ENCODE measurements at regions of chr19 and their contacts with region 1.

Region 1: DNA sequence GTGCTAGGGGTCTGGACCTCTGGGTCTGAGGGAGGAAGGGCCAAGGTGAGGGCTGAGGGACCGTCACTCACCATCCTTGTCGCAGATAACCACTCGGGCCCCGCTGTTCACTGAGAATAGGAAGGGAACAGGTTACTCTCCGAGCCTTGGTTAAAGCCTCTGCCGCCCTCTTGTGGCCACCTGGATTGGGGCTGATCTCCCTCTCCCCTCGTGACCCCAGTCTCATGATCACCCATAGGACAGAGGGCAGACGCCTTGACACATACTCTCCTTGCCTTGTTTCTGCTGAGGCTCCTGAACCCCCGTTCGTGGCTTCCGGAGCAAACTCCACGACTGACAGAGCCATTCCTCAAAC is 580 bp downstream of the HSD17B14 start:
- DNase-seq: peak; percentile 98
- H3K4me3 ChIP-seq: peak overlapping the region; percentile 30 to 51 (median 41)
- H3K27ac ChIP-seq: peak overlapping the region; percentile 71 to 86 (median 82)
- H3K4me1 ChIP-seq: peaks cover 0 to 27% (median 21%) of the 10 kb centered on the region in 4 donors
- H3K27me3 ChIP-seq: no peaks in the 10 kb centered on the region
- CTCF ChIP-seq: peak; percentile 86 to 98 (median 92)
- EP300 ChIP-seq: no peak
- POLR2A ChIP-seq: peak in 1 of 2 donors; percentile 42

Region 2: GRCh38 chr19:48379058-48379457 is 456.7 kb before region 1 on chr19:
- intact Hi-C with region 1: no loop called
- DNase-seq: no peak
- H3K4me3 ChIP-seq: no peak overlapping the region
- H3K27ac ChIP-seq: no peak overlapping the region
- H3K4me1 ChIP-seq: no peaks in the 10 kb centered on the region
- H3K27me3 ChIP-seq: no peaks in the 10 kb centered on the region
- CTCF ChIP-seq: no peak
- EP300 ChIP-seq: no peak
- POLR2A ChIP-seq: no peak

Region 3: DNA sequence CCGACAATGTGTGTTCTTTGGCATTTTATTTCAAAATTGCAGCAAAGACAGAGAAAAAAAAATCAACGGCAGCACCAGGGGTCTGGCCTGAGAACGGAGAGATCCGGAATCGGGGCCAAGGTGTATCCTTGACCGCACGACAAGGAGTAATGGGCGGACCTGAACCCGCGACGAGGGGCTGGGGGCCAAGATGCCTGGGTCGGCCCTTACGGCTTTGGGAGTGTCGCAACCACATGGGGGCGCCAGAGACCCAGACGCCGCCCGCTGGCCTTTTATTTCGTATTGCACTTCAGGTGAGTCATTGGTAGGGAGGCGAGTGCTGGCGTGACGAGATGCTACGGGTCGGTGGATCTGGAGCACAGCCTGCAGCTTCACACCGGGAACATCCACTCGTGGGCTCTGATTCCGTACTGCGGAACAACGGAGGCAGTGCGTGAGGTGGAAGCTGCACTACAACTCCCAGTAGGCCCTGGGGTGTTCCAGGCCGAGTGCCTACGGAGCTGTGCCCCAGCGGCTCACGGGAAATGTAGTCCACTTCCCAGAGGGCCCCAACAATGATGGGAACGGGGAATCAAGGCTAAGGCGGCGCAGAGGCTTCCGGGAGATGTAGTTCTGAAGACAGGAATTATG is 40.5 kb before region 1 on chr19:
- intact Hi-C with region 1: loop called (anchors 1 kb)
- DNase-seq: peak; percentile 97
- H3K4me3 ChIP-seq: peak overlapping the region; percentile 8 to 55 (median 47)
- H3K27ac ChIP-seq: peak overlapping the region; percentile 86 to 90 (median 87)
- H3K4me1 ChIP-seq: peaks cover 0 to 21% (median 20%) of the 10 kb centered on the region in 4 donors
- H3K27me3 ChIP-seq: no peaks in the 10 kb centered on the region
- CTCF ChIP-seq: peak; percentile 95 to 97 (median 96)
- EP300 ChIP-seq: peak in 1 of 4 donors; percentile 30
- POLR2A ChIP-seq: no peak

Region 4: GRCh38 chr19:48812094-48812929 is 23.4 kb before region 1 on chr19:
- intact Hi-C with region 1: loop called (anchors 2 kb)
- DNase-seq: peak; percentile 98
- H3K4me3 ChIP-seq: peak overlapping the region; percentile 57 to 64 (median 60)
- H3K27ac ChIP-seq: peak overlapping the region; percentile 89 to 96 (median 90)
- H3K4me1 ChIP-seq: peaks cover 0 to 23% (median 21%) of the 10 kb centered on the region in 4 donors
- H3K27me3 ChIP-seq: no peaks in the 10 kb centered on the region
- CTCF ChIP-seq: no peak
- EP300 ChIP-seq: peak in 3 of 4 donors; percentile 33 to 80 (median 55)
- POLR2A ChIP-seq: peak; percentile 69 to 79